ENCODE measurements at regions of chr11 and their contacts with region 1.

Region 1: GRCh38 chr11:15379483-15379882 is 264.8 kb downstream of the INSC start:
- DNase-seq: no peak
- H3K4me3 ChIP-seq: no peak overlapping the region
- H3K27ac ChIP-seq: no peak overlapping the region
- H3K4me1 ChIP-seq: no peaks in the 10 kb centered on the region
- H3K27me3 ChIP-seq: no peaks in the 10 kb centered on the region
- CTCF ChIP-seq: no peak

Region 2: DNA sequence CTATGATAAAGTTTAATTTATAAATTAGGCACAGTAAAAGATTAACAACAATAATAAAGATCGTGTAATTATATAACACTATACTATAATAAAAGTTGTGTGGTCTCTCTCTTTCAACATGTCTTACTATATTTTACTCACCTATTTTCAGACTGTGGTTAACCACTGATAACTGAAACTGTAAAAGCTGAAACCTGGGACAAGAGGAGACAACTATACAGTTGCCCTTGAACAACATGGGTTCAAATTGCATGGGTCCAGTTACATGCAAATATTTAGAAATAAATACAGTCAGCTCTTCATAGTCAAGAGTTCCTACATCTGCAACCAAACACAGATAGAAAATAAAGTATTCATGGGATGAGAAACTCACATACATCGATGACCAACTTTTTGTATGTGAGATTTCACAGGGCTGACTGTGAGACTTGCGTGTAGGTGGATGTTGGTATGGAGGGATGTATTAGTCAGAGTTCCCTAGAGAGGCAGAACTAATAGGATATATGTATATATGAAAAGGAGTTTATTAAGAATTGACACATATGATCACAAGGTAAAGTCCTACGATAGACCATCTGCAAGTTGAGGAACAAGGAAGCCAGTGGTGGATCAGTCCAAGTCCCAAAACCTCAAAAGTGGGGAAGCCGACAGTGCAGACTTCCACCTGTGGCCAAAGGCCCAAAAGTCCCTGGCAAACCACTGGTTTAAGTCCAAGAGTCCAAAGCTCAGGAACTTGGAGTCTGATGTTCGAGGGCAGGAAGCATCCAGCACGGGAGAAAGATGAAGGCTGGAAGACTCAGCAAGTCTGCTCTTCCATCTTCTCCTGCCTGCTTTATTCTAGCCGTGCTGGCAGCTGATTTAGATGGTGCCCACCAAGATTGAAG is 94.7 kb after region 1 on chr11:
- CTCF ChIA-PET with region 1: no interaction called
- dilution Hi-C with region 1: loop called (anchors 5 kb)
- in situ Hi-C with region 1: no loop called
- intact Hi-C with region 1: no loop called
- DNase-seq: no peak
- H3K4me3 ChIP-seq: no peak overlapping the region
- H3K27ac ChIP-seq: no peak overlapping the region
- H3K4me1 ChIP-seq: no peaks in the 10 kb centered on the region
- H3K27me3 ChIP-seq: no peaks in the 10 kb centered on the region
- CTCF ChIP-seq: no peak

Measured in mammary epithelial cell (primary cell).